Activated CD4-positive, alpha-beta T cell treated with anti-CD3 and anti-CD28 coated beads for 36 hours (primary cell): ENCODE measurements at regions of chr11 and their contacts with region 1.

Region 1: DNA sequence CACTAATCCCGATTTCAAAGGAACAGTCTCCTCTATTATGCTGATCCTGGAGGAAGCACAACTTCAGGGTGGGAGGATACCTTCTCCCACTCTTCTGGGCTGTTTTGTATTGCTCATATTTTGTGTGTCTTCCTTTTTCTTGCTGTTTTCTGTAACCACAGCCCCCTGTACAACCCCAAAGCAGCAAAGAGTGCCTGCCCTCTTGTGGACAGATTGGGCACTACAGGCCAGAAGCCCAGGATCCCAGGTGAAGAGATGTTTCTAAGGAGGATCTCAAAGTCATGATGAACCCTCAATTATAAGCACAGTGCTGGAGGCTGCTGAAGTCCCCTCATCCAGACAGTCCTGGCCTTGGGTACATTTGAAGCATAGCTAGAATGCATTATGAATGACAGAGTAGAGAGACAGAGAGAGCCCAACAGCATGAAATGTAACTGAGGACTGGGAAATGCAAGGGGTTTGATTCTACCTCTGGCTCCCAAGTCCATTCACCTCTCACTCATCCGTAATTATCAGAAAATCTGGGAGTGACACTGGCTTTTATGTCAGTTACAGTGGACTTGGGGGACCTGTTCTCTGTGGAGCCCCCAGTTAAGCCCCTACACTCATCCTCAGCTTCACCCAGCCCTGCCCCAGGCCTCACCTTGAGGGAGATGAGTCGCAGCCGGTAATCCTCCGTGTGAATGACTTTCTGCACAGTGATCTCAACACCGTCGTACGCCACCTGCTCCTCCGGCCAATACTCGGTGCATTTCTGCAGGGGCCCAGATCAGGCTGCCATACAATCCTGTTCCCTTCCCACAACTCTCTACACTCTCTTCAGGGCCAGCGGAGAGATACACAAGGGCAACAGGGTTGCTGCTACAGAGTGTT is 6.2 kb upstream of the IGSF22 start:
- DNase-seq: peak; percentile 78
- ATAC-seq: peak; percentile 73
- H3K4me3 Mint-ChIP-seq: no peak overlapping the region
- H3K27ac Mint-ChIP-seq: no peak overlapping the region
- H3K4me1 Mint-ChIP-seq: peaks cover 3% of the 10 kb centered on the region
- H3K27me3 Mint-ChIP-seq: no peaks in the 10 kb centered on the region

Region 2: GRCh38 chr11:18540207-18541009 is 191.8 kb before region 1 on chr11:
- CTCF ChIA-PET with region 1: interaction called, 12 read pairs
- POLR2A ChIA-PET with region 1: no interaction called
- intact Hi-C with region 1: loop called (anchors 1 kb)
- DNase-seq: no peak
- ATAC-seq: peak; percentile 76
- H3K4me3 Mint-ChIP-seq: no peak overlapping the region
- H3K27ac Mint-ChIP-seq: no peak overlapping the region
- H3K4me1 Mint-ChIP-seq: peaks cover 6% of the 10 kb centered on the region
- H3K27me3 Mint-ChIP-seq: no peaks in the 10 kb centered on the region

Region 3: DNA sequence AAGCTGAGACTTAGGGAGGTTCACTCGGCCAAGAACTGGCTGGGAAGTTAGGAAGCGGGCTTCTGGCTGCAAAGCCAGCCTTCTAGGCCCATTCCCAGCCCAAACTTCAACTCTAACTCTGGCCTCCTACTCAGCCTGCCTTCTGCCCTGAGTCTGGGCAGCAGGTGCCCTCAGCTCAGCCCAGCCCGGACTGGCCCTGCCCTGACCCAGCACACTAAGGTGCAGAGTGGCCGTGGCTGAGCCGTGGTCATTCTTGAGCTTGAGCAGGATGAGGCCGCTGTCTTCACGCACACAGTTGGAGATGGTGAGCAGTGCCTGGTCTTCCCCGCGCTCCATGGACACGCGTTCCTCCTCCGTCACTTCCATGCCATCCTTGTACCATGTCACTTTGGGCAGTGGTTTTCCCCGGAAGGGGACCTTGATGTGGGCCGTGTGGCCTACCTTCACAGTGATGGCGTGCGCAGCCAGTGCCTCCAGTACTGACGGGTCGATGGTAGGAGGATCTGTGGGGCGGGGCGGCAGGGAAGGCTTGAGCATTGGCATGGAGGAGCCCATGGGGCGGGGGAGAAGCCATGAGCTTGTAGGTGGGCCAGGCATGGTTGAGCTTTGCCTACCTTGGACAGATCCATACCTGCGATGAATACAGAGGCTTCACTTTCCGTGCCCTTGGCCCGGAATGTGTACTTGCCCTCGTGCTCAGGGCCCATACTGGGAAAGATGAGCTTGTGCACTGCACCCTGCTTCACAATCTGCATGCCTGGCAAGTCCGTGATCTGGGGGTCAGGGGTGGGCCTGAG is 18.3 kb before region 1 on chr11:
- CTCF ChIA-PET with region 1: interaction called, 14 read pairs
- POLR2A ChIA-PET with region 1: no interaction called
- intact Hi-C with region 1: no loop called
- DNase-seq: no peak
- ATAC-seq: no peak
- H3K4me3 Mint-ChIP-seq: no peak overlapping the region
- H3K27ac Mint-ChIP-seq: no peak overlapping the region
- H3K4me1 Mint-ChIP-seq: no peaks in the 10 kb centered on the region
- H3K27me3 Mint-ChIP-seq: no peaks in the 10 kb centered on the region

Region 4: DNA sequence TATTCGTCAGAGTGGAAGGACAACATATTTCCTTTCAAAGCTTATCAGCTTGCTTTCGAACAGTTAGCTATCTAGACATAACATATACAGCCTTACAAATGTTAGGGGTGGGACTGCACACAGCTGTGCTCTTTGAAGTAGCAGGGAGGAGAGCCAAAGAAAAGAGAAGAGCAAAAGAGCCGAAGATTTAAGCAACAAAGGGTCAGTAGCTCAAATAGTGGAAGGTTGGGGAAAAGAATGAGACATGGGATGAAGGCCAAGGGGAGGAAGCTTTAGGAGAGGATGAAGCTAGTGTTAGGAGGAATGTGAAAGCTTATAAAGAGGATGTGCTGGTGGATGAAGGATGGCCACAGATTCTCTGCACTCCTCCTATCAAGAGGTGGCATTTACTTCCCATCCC is 25.6 kb after region 1 on chr11:
- CTCF ChIA-PET with region 1: interaction called, 54 read pairs
- POLR2A ChIA-PET with region 1: no interaction called
- intact Hi-C with region 1: no loop called
- DNase-seq: no peak
- ATAC-seq: no peak
- H3K4me3 Mint-ChIP-seq: no peak overlapping the region
- H3K27ac Mint-ChIP-seq: no peak overlapping the region
- H3K4me1 Mint-ChIP-seq: no peaks in the 10 kb centered on the region
- H3K27me3 Mint-ChIP-seq: no peaks in the 10 kb centered on the region

Region 5: GRCh38 chr11:18768472-18768901 is 36.3 kb after region 1 on chr11:
- CTCF ChIA-PET with region 1: interaction called, 54 read pairs
- POLR2A ChIA-PET with region 1: no interaction called
- intact Hi-C with region 1: loop called (anchors 1 kb)
- DNase-seq: no peak
- ATAC-seq: peak; percentile 63
- H3K4me3 Mint-ChIP-seq: no peak overlapping the region
- H3K27ac Mint-ChIP-seq: no peak overlapping the region
- H3K4me1 Mint-ChIP-seq: peaks cover 11% of the 10 kb centered on the region
- H3K27me3 Mint-ChIP-seq: peaks cover 19% of the 10 kb centered on the region